ENCODE measurements at regions of chr13 and their contacts with region 1.

Region 1: DNA sequence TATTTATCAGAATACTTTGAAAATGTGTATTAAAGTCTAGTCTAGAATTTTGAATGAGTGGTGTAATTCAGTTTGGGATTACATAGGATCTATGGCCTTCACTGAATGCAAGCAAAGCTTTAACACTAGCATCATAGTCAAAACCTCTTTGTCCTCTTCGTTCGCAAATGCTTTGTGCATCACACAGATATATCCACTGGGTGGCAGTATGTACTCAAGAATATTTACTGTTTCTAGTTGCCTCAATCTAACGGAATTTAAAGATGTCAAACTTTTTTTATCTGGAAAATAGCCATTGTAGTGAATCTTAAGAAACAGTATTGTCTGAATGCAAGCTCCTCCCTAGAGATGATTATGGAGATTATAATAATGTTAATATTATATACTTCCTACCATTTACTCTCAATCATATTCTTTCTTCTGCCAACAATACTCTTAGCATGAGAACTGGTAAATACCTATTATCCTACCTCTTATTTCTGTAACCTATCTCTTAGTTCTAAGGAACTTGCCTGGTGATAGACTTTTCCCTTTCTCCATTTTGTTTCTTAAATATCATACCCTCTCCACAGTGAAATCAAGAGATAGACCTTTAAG is 25.8 kb downstream of the LACC1 start:
- H3K4me3 ChIP-seq: no peak overlapping the region
- H3K27ac ChIP-seq: no peak overlapping the region
- H3K4me1 ChIP-seq: no peaks in the 10 kb centered on the region
- CTCF ChIP-seq: no peak

Region 2: DNA sequence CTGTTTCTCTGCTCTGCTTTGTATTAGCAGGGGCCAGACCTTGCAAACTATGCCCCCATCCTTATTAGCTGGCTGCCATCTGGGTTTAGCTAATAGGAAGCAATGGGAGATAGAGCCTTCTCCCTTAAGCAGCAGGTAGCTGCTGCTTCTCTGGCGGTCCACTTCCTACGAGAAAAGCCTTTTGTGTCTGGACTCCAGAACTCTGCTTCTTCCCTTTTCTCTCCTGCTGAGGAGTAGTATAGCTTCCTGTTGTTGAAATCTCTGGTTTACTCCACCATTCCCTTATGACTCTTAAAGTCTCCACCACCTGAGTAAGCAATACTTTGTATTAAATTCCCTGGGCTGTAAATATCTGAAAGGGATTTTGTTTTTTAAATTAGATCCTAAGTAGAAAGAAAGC is 735.0 kb before region 1 on chr13:
- CTCF ChIA-PET with region 1: no interaction called
- POLR2A ChIA-PET with region 1: no interaction called
- H3K4me3 ChIP-seq: no peak overlapping the region
- H3K27ac ChIP-seq: no peak overlapping the region
- H3K4me1 ChIP-seq: no peaks in the 10 kb centered on the region
- CTCF ChIP-seq: no peak

Region 3: GRCh38 chr13:43686557-43686956 is 219.0 kb before region 1 on chr13:
- CTCF ChIA-PET with region 1: no interaction called
- POLR2A ChIA-PET with region 1: no interaction called
- H3K4me3 ChIP-seq: no peak overlapping the region
- H3K27ac ChIP-seq: no peak overlapping the region
- H3K4me1 ChIP-seq: no peaks in the 10 kb centered on the region
- CTCF ChIP-seq: no peak

Region 4: DNA sequence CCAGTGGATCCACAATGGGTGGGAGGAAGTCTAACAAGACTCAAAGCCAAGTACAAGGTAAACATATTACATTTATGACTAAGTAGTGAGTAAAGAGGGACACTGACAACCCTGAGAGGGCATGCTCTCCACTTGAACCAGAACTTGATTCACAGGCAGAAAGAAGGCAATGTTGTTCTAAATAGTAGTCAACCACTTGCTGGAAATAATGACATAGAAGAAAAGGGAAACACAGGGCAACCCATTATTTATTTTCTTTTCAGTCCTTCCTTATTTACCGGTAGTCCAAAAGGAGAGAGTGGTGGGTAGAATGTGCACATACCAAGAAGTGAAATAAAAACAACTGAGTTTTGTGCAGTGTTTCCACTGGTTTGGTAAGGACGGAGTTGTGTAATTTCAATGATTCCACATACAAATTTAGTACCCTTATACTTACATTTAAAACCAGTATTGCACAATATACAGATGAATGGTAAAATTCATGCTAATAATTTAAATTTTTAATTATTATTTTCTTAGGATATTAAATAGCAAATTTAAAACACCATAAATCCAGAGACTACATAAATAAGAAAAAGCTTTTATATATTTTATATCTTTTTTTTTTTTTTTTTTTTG is 184.6 kb before region 1 on chr13:
- CTCF ChIA-PET with region 1: no interaction called
- POLR2A ChIA-PET with region 1: no interaction called
- H3K4me3 ChIP-seq: no peak overlapping the region
- H3K27ac ChIP-seq: no peak overlapping the region
- H3K4me1 ChIP-seq: peaks cover 4% of the 10 kb centered on the region; the same call in 1 of the 2 replicates
- CTCF ChIP-seq: no peak

Region 5: GRCh38 chr13:43894438-43894837 is 11.1 kb before region 1 on chr13:
- CTCF ChIA-PET with region 1: interaction called, 16 read pairs
- POLR2A ChIA-PET with region 1: no interaction called
- H3K4me3 ChIP-seq: no peak overlapping the region
- H3K27ac ChIP-seq: no peak overlapping the region
- H3K4me1 ChIP-seq: no peaks in the 10 kb centered on the region
- CTCF ChIP-seq: no peak

Region 6: DNA sequence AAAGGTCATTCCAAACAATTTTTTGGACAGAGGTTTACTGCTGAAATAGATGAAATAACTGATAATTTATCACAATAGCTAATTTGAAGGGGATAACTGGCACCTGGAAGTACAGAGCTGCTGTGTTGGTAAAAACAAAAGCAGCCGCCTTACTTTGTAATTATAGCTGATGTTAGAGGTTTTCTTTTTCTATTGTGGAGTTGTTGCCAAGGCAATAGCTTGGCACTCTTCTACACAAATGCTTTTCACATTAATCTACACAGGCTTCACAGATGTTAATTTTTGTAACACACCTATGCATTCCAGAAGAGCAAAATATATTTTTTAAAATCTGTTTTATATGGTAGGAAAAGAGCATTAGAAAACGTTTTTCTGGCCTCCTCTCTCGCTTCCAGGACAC is 31.1 kb after region 1 on chr13:
- CTCF ChIA-PET with region 1: no interaction called
- POLR2A ChIA-PET with region 1: no interaction called
- H3K4me3 ChIP-seq: no peak overlapping the region
- H3K27ac ChIP-seq: no peak overlapping the region
- H3K4me1 ChIP-seq: no peaks in the 10 kb centered on the region
- CTCF ChIP-seq: no peak

Region 7: GRCh38 chr13:44465318-44465717 is 559.8 kb after region 1 on chr13:
- CTCF ChIA-PET with region 1: interaction called, 20 read pairs
- POLR2A ChIA-PET with region 1: no interaction called
- H3K4me3 ChIP-seq: no peak overlapping the region
- H3K27ac ChIP-seq: no peak overlapping the region
- H3K4me1 ChIP-seq: no peaks in the 10 kb centered on the region
- CTCF ChIP-seq: no peak

Region 8: DNA sequence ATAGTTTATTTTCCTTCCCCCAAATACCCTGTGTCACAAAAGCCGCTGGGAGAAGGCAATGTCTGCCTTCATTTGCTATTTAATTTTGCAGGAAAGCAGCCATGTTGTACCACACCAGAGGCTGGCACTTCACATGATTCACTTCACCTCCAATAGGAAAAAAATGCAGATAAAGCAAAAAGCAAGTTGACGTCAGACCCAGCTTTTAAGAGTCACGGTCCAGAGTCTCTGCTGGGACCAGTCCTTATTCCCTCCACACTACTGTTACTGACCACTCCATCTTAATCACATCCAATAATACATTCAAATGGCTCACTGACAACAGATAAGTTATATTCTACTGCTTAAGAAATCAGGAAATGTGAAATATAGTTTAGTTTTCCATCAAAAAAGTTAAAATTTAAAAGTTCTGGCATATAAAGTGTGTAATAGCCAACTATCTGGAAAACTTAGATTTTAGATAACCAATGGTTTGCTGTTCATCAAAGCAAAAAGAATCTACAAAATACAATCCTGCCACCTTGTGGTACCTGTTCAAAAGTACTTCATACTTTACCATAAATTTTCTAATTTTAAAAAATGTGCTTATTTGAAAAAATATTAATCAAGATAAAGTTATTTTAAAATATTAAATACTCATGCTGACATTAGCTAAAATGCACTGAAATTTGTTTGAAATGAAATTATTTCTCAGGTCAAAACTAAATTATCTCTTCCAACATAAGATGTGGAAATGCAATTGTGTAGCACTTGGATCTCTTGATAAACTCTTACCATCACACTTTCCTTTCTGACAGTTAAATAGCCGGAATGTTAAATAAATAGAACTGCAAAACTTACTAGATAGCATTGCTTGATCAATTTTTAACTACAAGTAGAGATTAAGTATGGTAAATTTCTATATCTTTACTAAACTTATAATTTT is 565.4 kb after region 1 on chr13:
- CTCF ChIA-PET with region 1: interaction called, 27 read pairs
- POLR2A ChIA-PET with region 1: no interaction called
- H3K4me3 ChIP-seq: no peak overlapping the region
- H3K27ac ChIP-seq: no peak overlapping the region
- H3K4me1 ChIP-seq: peaks cover 9% of the 10 kb centered on the region
- CTCF ChIP-seq: no peak

Measured in HEK293 (cell line).